Naive thymus-derived CD4-positive, alpha-beta T cell (primary cell): ENCODE measurements at regions of chr17 and their contacts with region 1.

Region 1: DNA sequence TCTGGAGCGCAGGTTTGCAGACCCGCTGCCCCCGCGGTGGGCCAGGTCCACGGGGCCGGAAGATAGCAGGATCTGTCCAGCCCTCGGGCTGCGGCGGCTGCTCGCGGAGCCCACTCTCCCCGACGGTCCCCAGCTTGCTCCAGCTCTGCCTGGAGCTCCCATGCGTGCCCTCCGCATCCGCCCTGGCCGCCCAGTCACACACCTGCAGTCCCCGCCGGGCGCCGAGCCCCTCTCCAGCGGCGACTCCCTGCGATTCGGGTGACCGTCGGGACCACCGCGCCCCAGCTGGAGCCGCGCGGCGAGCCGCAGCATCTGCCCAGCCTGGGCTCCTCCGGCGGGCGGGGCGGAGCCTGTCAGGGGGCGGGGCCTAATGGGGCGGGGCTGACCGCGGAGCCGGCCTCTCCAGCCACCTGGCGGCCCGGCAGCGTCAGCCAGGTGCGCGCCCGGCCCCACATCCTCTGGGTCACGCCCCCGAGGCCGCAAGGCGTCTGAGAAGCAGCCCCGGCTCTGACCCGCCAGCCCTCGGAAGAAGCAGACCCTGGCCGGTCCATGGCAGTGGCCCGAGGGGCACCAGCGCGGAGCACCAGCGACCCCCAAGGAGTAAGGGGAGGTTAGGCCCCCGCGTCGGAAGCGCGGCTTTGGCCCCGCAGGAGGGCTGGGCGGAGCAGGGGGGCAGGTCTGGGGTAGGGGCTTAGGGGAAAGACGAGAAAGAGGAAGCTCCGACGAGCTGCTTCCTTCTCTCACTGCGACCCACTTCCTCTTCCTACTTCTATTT is at the start of gene PIK3R5:
- DNase-seq: peak; percentile 71 to 82 (median 78)
- ATAC-seq: peak; percentile 89
- H3K4me3 ChIP-seq: peak within 1 kb of the TSS; percentile 81
- H3K4me3 Mint-ChIP-seq: peak within 1 kb of the TSS; percentile 86 to 100 (median 98)
- H3K27ac ChIP-seq: peak within 1 kb of the TSS; percentile 84
- H3K27ac Mint-ChIP-seq: peak within 1 kb of the TSS; percentile 80 to 98 (median 94)
- H3K4me1 ChIP-seq: peaks cover 34 to 35% of the 10 kb centered on the region in 2 donors
- H3K4me1 Mint-ChIP-seq: peaks cover 31 to 56% (median 46%) of the 10 kb centered on the region in 7 donors
- H3K27me3 ChIP-seq: no peaks in the 10 kb centered on the region
- H3K27me3 Mint-ChIP-seq: no peaks in the 10 kb centered on the region
- total RNA-seq, gene PIK3R5: 73.5 to 231 (median 77.6) TPM

Region 2: DNA sequence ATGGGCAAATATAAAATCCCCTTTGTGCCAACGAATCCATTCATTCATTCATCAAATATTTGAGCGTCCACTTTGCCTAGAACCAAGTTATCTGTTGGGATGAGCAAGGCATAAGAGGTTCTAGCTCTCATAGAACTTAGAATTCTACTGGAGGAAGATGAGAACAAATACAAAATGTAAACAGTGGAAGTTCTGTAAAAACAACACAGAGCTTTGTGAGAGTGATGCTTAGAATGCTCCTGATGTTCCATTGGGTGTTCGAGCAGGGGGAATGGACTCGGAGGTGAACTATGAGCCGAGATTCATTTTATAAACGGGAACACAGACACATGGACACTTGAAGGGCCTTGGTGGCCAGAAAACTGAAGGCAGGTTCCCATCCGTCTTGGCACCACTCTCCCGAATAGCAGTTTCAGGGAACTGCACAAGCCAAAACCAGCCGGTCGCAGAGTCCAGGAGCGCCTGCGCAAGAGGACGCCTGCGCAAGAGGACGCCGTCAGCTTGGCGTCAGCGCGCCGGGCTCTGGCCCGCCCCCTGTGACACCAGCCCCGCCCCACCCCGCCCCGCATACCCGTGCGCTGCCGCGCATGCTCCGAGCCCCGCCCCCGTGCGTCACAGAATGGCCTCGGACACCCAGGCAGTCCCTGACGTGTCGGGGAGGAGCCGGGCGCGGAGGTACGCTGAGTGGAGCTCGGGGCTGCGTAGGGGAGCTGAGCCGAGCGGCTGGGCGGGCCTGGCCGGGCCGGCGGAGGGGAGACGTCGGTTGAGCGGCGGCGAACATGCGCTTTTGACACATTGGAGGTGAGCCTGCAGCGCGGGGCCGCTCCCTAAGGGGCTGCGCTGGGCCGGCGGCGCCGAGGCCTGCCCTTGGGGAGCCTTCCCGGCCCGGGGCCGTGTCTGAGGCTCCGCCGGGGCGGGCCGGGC is 530.1 kb before region 1 on chr17 and contains the start of gene NDEL1:
- CTCF ChIA-PET with region 1: no interaction called
- POLR2A ChIA-PET with region 1: no interaction called
- intact Hi-C with region 1: loop called (anchors 5 kb)
- DNase-seq: peak; percentile 97 to 99 (median 99)
- ATAC-seq: peak; percentile 95
- H3K4me3 ChIP-seq: peak within 1 kb of the TSS; percentile 81
- H3K4me3 Mint-ChIP-seq: peak within 1 kb of the TSS; percentile 94 to 99 (median 96)
- H3K27ac ChIP-seq: peak within 1 kb of the TSS; percentile 100
- H3K27ac Mint-ChIP-seq: peak within 1 kb of the TSS; percentile 96 to 100 (median 98)
- H3K4me1 ChIP-seq: peaks cover 10 to 22% of the 10 kb centered on the region in 2 donors
- H3K4me1 Mint-ChIP-seq: peaks cover 9 to 46% (median 37%) of the 10 kb centered on the region in 7 donors
- H3K27me3 ChIP-seq: no peaks in the 10 kb centered on the region
- H3K27me3 Mint-ChIP-seq: no peaks in the 10 kb centered on the region
- total RNA-seq, gene NDEL1: 72.6 to 274 (median 116) TPM

Region 3: GRCh38 chr17:8894673-8895578 is 70.7 kb before region 1 on chr17:
- CTCF ChIA-PET with region 1: interaction called, 13 read pairs
- POLR2A ChIA-PET with region 1: interaction called, 20 read pairs
- intact Hi-C with region 1: loop called (anchors 1 kb)
- DNase-seq: peak in 6 of 9 donors; percentile 31 to 55 (median 47)
- ATAC-seq: peak; percentile 33
- H3K4me3 ChIP-seq: no peak overlapping the region
- H3K4me3 Mint-ChIP-seq: peak overlapping the region in 6 of 10 donors; percentile 1 to 69 (median 42)
- H3K27ac ChIP-seq: peak overlapping the region; percentile 12
- H3K27ac Mint-ChIP-seq: peak overlapping the region; percentile 16 to 96 (median 70)
- H3K4me1 ChIP-seq: peaks cover 50% of the 10 kb centered on the region in 2 donors
- H3K4me1 Mint-ChIP-seq: peaks cover 44 to 71% (median 62%) of the 10 kb centered on the region in 7 donors
- H3K27me3 ChIP-seq: no peaks in the 10 kb centered on the region
- H3K27me3 Mint-ChIP-seq: no peaks in the 10 kb centered on the region

Region 4: GRCh38 chr17:8934346-8934745 is 31.2 kb before region 1 on chr17:
- CTCF ChIA-PET with region 1: no interaction called
- POLR2A ChIA-PET with region 1: interaction called, 47 read pairs
- intact Hi-C with region 1: loop called (anchors 5 kb)
- DNase-seq: no peak
- ATAC-seq: no peak
- H3K4me3 ChIP-seq: no peak overlapping the region
- H3K4me3 Mint-ChIP-seq: peak overlapping the region in 2 of 10 donors; percentile 24 to 54
- H3K27ac ChIP-seq: no peak overlapping the region
- H3K27ac Mint-ChIP-seq: peak overlapping the region in 5 of 9 donors; percentile 4 to 87 (median 68)
- H3K4me1 ChIP-seq: peaks cover 13 to 57% of the 10 kb centered on the region in 2 donors
- H3K4me1 Mint-ChIP-seq: peaks cover 20 to 87% (median 67%) of the 10 kb centered on the region in 7 donors
- H3K27me3 ChIP-seq: no peaks in the 10 kb centered on the region
- H3K27me3 Mint-ChIP-seq: no peaks in the 10 kb centered on the region

Region 5: GRCh38 chr17:8949061-8949661 is 16.4 kb before region 1 on chr17:
- CTCF ChIA-PET with region 1: interaction called, 3 read pairs
- POLR2A ChIA-PET with region 1: interaction called, 116 read pairs
- intact Hi-C with region 1: loop called (anchors 1 kb)
- DNase-seq: no peak
- ATAC-seq: no peak
- H3K4me3 ChIP-seq: peak overlapping the region; percentile 15
- H3K4me3 Mint-ChIP-seq: peak overlapping the region in 9 of 10 donors; percentile 43 to 82 (median 64)
- H3K27ac ChIP-seq: peak overlapping the region; percentile 44
- H3K27ac Mint-ChIP-seq: peak overlapping the region; percentile 77 to 91 (median 81)
- H3K4me1 ChIP-seq: peaks cover 52 to 84% of the 10 kb centered on the region in 2 donors
- H3K4me1 Mint-ChIP-seq: peaks cover 59 to 98% (median 96%) of the 10 kb centered on the region in 7 donors
- H3K27me3 ChIP-seq: no peaks in the 10 kb centered on the region
- H3K27me3 Mint-ChIP-seq: no peaks in the 10 kb centered on the region

Region 6: DNA sequence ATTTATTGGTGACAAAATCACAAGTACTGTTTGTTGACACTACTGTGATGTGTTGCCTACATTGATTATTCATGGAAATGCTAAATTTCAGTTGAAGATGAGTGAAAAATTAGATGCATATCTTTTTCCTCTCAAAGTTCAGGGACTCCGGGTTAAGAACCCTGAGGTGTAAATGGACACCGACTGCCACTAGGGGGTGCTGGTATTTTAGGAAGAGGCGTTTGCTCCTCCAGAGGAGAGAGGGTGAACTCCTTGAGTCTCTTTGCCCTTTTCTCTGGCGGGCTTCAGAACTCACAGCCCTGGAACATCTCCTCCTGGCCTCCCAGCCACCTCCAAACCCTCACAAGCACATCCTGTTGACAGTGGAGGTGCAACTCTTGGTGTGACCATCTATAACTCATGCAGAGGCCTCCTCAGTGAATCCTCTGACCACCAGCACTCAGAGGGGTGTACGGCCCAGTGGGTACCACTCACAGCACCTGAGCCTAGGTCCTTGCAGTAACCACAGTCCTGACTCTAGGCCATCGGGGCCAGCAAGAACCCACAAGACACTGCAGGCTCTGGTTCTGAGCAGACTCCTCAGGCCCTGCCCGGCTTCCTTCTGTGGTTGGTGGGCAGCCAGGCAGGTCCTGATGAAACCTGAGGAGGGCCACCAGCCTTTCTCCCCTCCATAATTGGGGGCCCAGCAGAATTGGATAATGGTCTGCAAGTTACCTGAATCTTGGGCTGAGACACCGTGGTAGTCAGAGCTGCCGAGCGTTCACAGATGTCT is 26.1 kb after region 1 on chr17:
- CTCF ChIA-PET with region 1: interaction called, 3 read pairs
- POLR2A ChIA-PET with region 1: no interaction called
- intact Hi-C with region 1: loop called in 1 of 2 experiments (anchors 1 kb)
- DNase-seq: peak; percentile 34 to 67 (median 54)
- ATAC-seq: peak; percentile 84
- H3K4me3 ChIP-seq: no peak overlapping the region
- H3K4me3 Mint-ChIP-seq: no peak overlapping the region
- H3K27ac ChIP-seq: no peak overlapping the region
- H3K27ac Mint-ChIP-seq: no peak overlapping the region
- H3K4me1 ChIP-seq: peaks cover 0 to 6% of the 10 kb centered on the region in 2 donors
- H3K4me1 Mint-ChIP-seq: peaks cover 0 to 11% (median 5%) of the 10 kb centered on the region in 7 donors
- H3K27me3 ChIP-seq: no peaks in the 10 kb centered on the region
- H3K27me3 Mint-ChIP-seq: peaks cover 0 to 4% (median 0%) of the 10 kb centered on the region in 5 donors

Region 7: DNA sequence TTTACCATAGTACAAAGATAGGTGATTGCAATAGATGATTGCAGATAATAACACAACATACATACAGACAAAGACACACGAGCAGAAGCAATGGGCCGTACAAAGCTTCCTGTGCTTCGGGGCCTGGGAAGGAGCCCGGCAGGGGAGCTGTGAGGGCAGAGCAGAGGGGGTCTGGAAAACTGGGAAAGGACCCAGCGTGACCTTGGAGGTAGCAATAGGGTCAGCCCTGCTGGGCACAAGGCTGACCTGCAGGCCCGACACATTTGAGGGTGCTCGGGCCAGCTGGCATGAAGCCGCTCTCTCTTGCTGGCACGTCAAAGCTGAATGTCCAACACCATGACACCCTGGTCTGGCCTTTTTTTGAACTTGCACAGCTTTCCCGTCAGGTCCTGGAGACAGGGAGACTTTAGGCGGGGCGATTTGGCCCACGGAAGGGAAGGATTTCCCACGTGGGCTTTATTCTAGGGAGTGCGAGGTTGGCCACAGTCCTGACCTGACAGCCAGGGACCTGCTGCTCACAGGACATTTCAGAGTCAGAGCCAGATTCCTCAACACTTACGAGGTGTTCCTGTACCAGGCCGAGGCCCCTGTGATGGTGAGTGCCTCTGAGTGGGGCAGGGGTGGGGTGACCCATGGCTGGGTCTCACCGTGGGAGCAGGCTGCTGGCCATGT is 138.9 kb after region 1 on chr17:
- CTCF ChIA-PET with region 1: no interaction called
- POLR2A ChIA-PET with region 1: no interaction called
- intact Hi-C with region 1: no loop called
- DNase-seq: no peak
- ATAC-seq: no peak
- H3K4me3 ChIP-seq: no peak overlapping the region
- H3K4me3 Mint-ChIP-seq: no peak overlapping the region
- H3K27ac ChIP-seq: no peak overlapping the region
- H3K27ac Mint-ChIP-seq: no peak overlapping the region
- H3K4me1 ChIP-seq: no peaks in the 10 kb centered on the region
- H3K4me1 Mint-ChIP-seq: peaks cover 0 to 4% (median 0%) of the 10 kb centered on the region in 7 donors
- H3K27me3 ChIP-seq: no peaks in the 10 kb centered on the region
- H3K27me3 Mint-ChIP-seq: peaks cover 0 to 15% (median 12%) of the 10 kb centered on the region in 5 donors

Region 8: GRCh38 chr17:9115446-9116191 is 150.0 kb after region 1 on chr17:
- CTCF ChIA-PET with region 1: no interaction called
- POLR2A ChIA-PET with region 1: no interaction called
- intact Hi-C with region 1: no loop called
- DNase-seq: peak in 6 of 9 donors; percentile 9 to 56 (median 20)
- ATAC-seq: peak; percentile 63
- H3K4me3 ChIP-seq: peak overlapping the region; percentile 13
- H3K4me3 Mint-ChIP-seq: peak overlapping the region in 9 of 10 donors; percentile 55 to 78 (median 69)
- H3K27ac ChIP-seq: no peak overlapping the region
- H3K27ac Mint-ChIP-seq: peak overlapping the region in 3 of 9 donors; percentile 13 to 34 (median 31)
- H3K4me1 ChIP-seq: no peaks in the 10 kb centered on the region
- H3K4me1 Mint-ChIP-seq: peaks cover 0 to 9% (median 8%) of the 10 kb centered on the region in 7 donors
- H3K27me3 ChIP-seq: no peaks in the 10 kb centered on the region
- H3K27me3 Mint-ChIP-seq: peaks cover 0 to 10% (median 7%) of the 10 kb centered on the region in 5 donors